ENCODE measurements at regions of chr3 and their contacts with region 1.

Region 1: GRCh38 chr3:111717601-111718000 is 122.5 kb upstream of the ZBED2 start:
- DNase-seq: peak; percentile 75
- ATAC-seq: peak; percentile 89

Region 2: GRCh38 chr3:111577794-111578685 is 139.6 kb before region 1 on chr3:
- intact Hi-C with region 1: no loop called
- DNase-seq: no peak
- ATAC-seq: peak; percentile 67

Region 3: DNA sequence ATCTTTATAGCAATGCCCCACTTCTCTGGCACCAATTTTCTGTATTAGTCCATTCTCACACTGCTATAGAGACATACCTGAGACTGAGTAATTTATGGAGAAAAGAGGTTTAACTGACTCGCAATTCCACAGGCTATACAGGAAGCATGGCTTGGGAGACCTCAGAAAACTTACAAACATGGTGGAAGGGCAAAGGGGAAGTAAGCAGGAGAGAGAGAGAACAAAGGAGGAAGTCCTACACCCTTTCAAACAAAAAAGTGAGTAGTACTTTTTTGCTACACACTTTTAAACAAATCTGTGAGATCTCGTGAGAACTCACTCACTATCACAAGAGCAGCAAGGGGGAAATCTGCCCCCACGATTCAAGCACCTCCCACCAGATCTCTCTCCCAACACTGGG is 54.7 kb before region 1 on chr3:
- intact Hi-C with region 1: no loop called
- DNase-seq: no peak
- ATAC-seq: no peak

Region 4: DNA sequence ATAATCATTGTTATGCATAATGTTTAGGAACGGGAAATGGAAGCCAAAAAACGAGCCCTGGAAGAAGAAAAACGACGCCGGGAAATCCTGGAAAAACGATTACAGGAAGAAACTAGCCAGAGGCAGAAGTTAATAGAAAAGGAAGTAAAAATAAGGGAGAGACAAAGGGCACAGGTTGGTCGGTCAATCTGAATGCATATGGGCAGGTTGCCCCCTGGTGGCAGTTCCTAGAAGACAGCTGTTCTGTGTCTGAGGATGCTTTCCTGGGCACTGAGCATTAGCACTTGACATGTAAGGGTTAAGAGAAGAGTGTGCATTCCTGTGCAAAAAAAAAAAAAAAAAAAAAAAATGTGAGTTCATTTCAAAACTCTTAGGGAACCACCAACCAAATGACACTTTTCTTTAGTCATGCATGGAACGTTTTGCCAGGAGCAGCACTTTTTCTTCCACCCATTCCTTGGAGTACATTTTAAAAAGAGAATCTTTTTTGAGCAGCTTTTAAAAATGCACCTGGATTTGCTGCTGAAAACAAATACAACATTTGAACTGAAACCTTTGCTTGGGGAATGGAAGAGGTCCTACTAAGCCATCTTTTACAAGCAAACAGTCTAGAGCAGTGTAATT is 250.2 kb after region 1 on chr3:
- intact Hi-C with region 1: loop called (anchors 2 kb)
- DNase-seq: peak; percentile 80
- ATAC-seq: peak; percentile 78